ENCODE measurements at regions of chr4 and their contacts with region 1.

Region 1: GRCh38 chr4:112266821-112267220 is 18.9 kb downstream of the TIFA start:
- DNase-seq: no peak
- ATAC-seq: peak; percentile 52
- H3K4me3 ChIP-seq: no peak overlapping the region
- H3K27ac ChIP-seq: no peak overlapping the region
- H3K4me1 ChIP-seq: no peaks in the 10 kb centered on the region
- H3K27me3 ChIP-seq: no peaks in the 10 kb centered on the region
- CTCF ChIP-seq: no peak
- EP300 ChIP-seq: no peak
- POLR2A ChIP-seq: no peak
- RAD21 ChIP-seq: no peak

Region 2: GRCh38 chr4:111960241-111960667 is 306.6 kb before region 1 on chr4:
- CTCF ChIA-PET with region 1: no interaction called
- POLR2A ChIA-PET with region 1: no interaction called
- in situ Hi-C with region 1: no loop called
- intact Hi-C with region 1: no loop called
- DNase-seq: no peak
- ATAC-seq: no peak
- H3K4me3 ChIP-seq: no peak overlapping the region
- H3K27ac ChIP-seq: no peak overlapping the region
- H3K4me1 ChIP-seq: no peaks in the 10 kb centered on the region
- H3K27me3 ChIP-seq: no peaks in the 10 kb centered on the region; a peak in 1 of 5 replicates
- CTCF ChIP-seq: no peak
- EP300 ChIP-seq: no peak
- POLR2A ChIP-seq: no peak
- RAD21 ChIP-seq: no peak

Region 3: DNA sequence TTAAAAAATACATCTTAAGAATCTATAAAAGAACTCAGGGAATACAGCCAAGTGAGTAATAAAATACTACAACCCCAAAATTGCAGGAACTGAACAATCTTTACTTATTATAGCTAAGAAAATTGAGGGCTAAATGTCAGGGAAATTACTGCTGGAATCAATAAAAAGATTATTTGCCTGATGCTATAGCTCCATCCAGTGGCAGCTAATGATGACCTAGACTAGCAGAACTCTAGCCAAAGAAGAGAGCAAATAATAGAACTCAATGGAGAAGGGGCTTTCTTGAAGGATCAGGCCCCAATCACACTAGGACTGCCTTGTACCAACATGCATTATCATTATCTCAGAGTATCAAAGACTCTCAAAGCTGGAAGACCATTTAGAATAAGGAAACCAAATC is 206.6 kb before region 1 on chr4:
- CTCF ChIA-PET with region 1: no interaction called
- POLR2A ChIA-PET with region 1: no interaction called
- in situ Hi-C with region 1: no loop called
- intact Hi-C with region 1: no loop called
- DNase-seq: peak; percentile 7
- ATAC-seq: peak; percentile 47; the same call in 2 of the 3 replicates
- H3K4me3 ChIP-seq: no peak overlapping the region
- H3K27ac ChIP-seq: no peak overlapping the region
- H3K4me1 ChIP-seq: no peaks in the 10 kb centered on the region
- H3K27me3 ChIP-seq: no peaks in the 10 kb centered on the region
- CTCF ChIP-seq: peak; percentile 28
- EP300 ChIP-seq: no peak
- POLR2A ChIP-seq: no peak
- RAD21 ChIP-seq: no peak

Region 4: DNA sequence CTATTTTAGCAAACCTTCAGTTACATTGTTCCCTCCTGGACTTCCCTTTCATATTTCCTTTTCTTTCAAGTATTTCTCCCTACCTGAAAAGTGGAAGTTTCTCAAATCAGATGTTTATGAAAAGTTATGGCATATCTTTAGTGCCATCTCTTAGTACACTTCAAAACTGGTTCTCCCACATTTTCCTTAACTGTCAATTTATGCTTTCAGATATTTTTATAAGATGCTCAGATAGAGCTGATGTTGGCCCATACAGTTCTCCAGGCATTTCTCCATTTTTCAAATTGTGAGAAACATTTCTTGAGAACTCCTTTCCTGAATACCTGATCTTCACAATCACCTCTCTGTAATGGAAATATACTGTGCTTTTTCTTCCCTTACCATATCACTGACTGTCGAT is 67.8 kb before region 1 on chr4:
- CTCF ChIA-PET with region 1: no interaction called
- POLR2A ChIA-PET with region 1: no interaction called
- in situ Hi-C with region 1: no loop called
- intact Hi-C with region 1: no loop called
- DNase-seq: no peak
- ATAC-seq: no peak
- H3K4me3 ChIP-seq: no peak overlapping the region
- H3K27ac ChIP-seq: no peak overlapping the region
- H3K4me1 ChIP-seq: peaks cover 22% of the 10 kb centered on the region
- H3K27me3 ChIP-seq: no peaks in the 10 kb centered on the region
- CTCF ChIP-seq: no peak
- EP300 ChIP-seq: no peak
- POLR2A ChIP-seq: no peak
- RAD21 ChIP-seq: no peak

Region 5: GRCh38 chr4:112214390-112215264 is 52.2 kb before region 1 on chr4:
- CTCF ChIA-PET with region 1: interaction called, 3 read pairs
- POLR2A ChIA-PET with region 1: no interaction called
- in situ Hi-C with region 1: no loop called
- intact Hi-C with region 1: loop called (anchors 10 kb)
- DNase-seq: peak; percentile 51
- ATAC-seq: 0 out of 3 replicates have a peak, but pooled peaks have one; percentile 35
- H3K4me3 ChIP-seq: no peak overlapping the region
- H3K27ac ChIP-seq: no peak overlapping the region
- H3K4me1 ChIP-seq: peaks cover 27% of the 10 kb centered on the region
- H3K27me3 ChIP-seq: no peaks in the 10 kb centered on the region
- CTCF ChIP-seq: peak; percentile 50
- EP300 ChIP-seq: no peak
- POLR2A ChIP-seq: no peak
- RAD21 ChIP-seq: peak; percentile 44; the same call in 1 of the 2 replicates

Measured in HepG2 (cell line).